Naive thymus-derived CD4-positive, alpha-beta T cell (primary cell): ENCODE measurements at regions of chr12 and their contacts with region 1.

Region 1: DNA sequence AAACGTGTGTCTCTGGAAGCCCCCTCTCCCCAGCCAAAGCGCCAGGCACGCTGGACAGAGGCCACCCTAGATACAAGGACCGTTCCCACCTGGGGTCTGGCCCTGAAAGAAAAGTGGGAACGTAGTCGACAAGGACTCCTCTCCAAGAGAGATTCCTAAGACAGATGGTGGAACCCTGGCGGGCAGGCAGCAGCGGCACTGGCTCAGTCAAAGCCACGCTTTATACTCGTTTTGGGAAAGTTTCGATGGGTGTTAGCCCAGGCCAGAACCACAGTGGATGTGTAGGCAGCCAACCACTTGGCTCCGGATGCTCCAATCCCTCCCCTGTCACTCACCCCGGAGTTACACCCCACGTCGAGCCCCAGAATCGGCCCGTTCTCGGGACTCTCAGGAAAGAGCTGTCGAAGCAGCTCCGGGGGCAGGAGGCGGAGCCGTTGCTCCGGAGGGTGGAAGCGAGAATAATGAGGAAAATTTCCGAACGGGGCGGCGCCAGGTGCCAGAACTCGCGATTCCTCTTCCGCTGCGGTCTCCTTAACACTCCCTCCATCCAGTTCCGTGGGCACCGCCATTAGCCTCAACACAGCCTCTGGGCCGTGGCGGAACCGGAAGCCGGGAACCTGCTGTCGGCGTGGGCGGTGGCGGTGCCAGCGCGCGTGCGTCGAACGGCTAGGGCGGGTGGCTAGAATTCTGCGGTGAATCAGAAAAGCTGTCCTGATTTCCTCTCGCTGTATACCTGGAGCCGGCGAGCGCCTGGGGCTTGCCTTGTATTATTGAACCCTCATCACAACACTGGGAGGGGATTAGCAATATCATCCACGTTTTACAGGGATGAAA is at the start of gene BCDIN3D:
- DNase-seq: peak; percentile 83 to 95 (median 91)
- ATAC-seq: peak; percentile 96
- H3K4me3 ChIP-seq: peak within 1 kb of the TSS; percentile 73
- H3K4me3 Mint-ChIP-seq: peak within 1 kb of the TSS; percentile 85 to 100 (median 94)
- H3K27ac ChIP-seq: peak within 1 kb of the TSS; percentile 80
- H3K27ac Mint-ChIP-seq: peak within 1 kb of the TSS; percentile 90 to 98 (median 96)
- H3K4me1 ChIP-seq: peaks cover 12 to 20% of the 10 kb centered on the region in 2 donors
- H3K4me1 Mint-ChIP-seq: peaks cover 19 to 65% (median 43%) of the 10 kb centered on the region in 7 donors
- H3K27me3 ChIP-seq: no peaks in the 10 kb centered on the region
- H3K27me3 Mint-ChIP-seq: no peaks in the 10 kb centered on the region
- total RNA-seq, gene BCDIN3D: 3.7 to 17.4 (median 6.8) TPM

Region 2: GRCh38 chr12:49366652-49367380 is 475.9 kb before region 1 on chr12:
- CTCF ChIA-PET with region 1: no interaction called
- POLR2A ChIA-PET with region 1: no interaction called
- intact Hi-C with region 1: loop called in 1 of 2 experiments (anchors 1 kb)
- DNase-seq: peak; percentile 72 to 95 (median 82)
- ATAC-seq: peak; percentile 90
- H3K4me3 ChIP-seq: peak overlapping the region; percentile 90
- H3K4me3 Mint-ChIP-seq: peak overlapping the region; percentile 71 to 97 (median 88)
- H3K27ac ChIP-seq: peak overlapping the region; percentile 87
- H3K27ac Mint-ChIP-seq: peak overlapping the region; percentile 65 to 97 (median 94)
- H3K4me1 ChIP-seq: peaks cover 0 to 15% of the 10 kb centered on the region in 2 donors
- H3K4me1 Mint-ChIP-seq: peaks cover 11 to 39% (median 31%) of the 10 kb centered on the region in 7 donors
- H3K27me3 ChIP-seq: no peaks in the 10 kb centered on the region
- H3K27me3 Mint-ChIP-seq: peaks cover 0 to 2% (median 0%) of the 10 kb centered on the region in 5 donors

Region 3: GRCh38 chr12:49636979-49637755 is 205.6 kb before region 1 on chr12:
- CTCF ChIA-PET with region 1: interaction called, 10 read pairs
- POLR2A ChIA-PET with region 1: no interaction called
- intact Hi-C with region 1: loop called in 1 of 2 experiments (anchors 5 kb)
- DNase-seq: peak in 8 of 9 donors; percentile 45 to 71 (median 61)
- ATAC-seq: peak; percentile 95
- H3K4me3 ChIP-seq: no peak overlapping the region
- H3K4me3 Mint-ChIP-seq: peak overlapping the region in 1 of 10 donors; percentile 20
- H3K27ac ChIP-seq: peak overlapping the region; percentile 38
- H3K27ac Mint-ChIP-seq: peak overlapping the region; percentile 13 to 90 (median 68)
- H3K4me1 ChIP-seq: peaks cover 6 to 11% of the 10 kb centered on the region in 2 donors
- H3K4me1 Mint-ChIP-seq: peaks cover 10 to 36% (median 26%) of the 10 kb centered on the region in 7 donors
- H3K27me3 ChIP-seq: no peaks in the 10 kb centered on the region
- H3K27me3 Mint-ChIP-seq: no peaks in the 10 kb centered on the region

Region 4: GRCh38 chr12:49763006-49763591 is 79.6 kb before region 1 on chr12:
- CTCF ChIA-PET with region 1: interaction called, 32 read pairs
- POLR2A ChIA-PET with region 1: interaction called, 3 read pairs
- intact Hi-C with region 1: loop called (anchors 1 kb)
- DNase-seq: peak; percentile 61 to 77 (median 68)
- ATAC-seq: peak; percentile 92
- H3K4me3 ChIP-seq: no peak overlapping the region
- H3K4me3 Mint-ChIP-seq: peak overlapping the region; percentile 29 to 78 (median 54)
- H3K27ac ChIP-seq: peak overlapping the region; percentile 57
- H3K27ac Mint-ChIP-seq: peak overlapping the region; percentile 76 to 93 (median 84)
- H3K4me1 ChIP-seq: peaks cover 25 to 43% of the 10 kb centered on the region in 2 donors
- H3K4me1 Mint-ChIP-seq: peaks cover 42 to 65% (median 60%) of the 10 kb centered on the region in 7 donors
- H3K27me3 ChIP-seq: no peaks in the 10 kb centered on the region
- H3K27me3 Mint-ChIP-seq: no peaks in the 10 kb centered on the region

Region 5: GRCh38 chr12:49828133-49829091 is 14.3 kb before region 1 on chr12 and contains the start of gene NCKAP5L:
- CTCF ChIA-PET with region 1: interaction called, 10 read pairs
- POLR2A ChIA-PET with region 1: interaction called, 43 read pairs
- intact Hi-C with region 1: loop called (anchors 1 kb)
- DNase-seq: peak; percentile 86 to 94 (median 93)
- ATAC-seq: peak; percentile 96
- H3K4me3 ChIP-seq: peak within 1 kb of the TSS; percentile 82
- H3K4me3 Mint-ChIP-seq: peak within 1 kb of the TSS; percentile 88 to 99 (median 96)
- H3K27ac ChIP-seq: peak within 1 kb of the TSS; percentile 79
- H3K27ac Mint-ChIP-seq: peak within 1 kb of the TSS; percentile 89 to 99 (median 95)
- H3K4me1 ChIP-seq: peaks cover 8 to 16% of the 10 kb centered on the region in 2 donors
- H3K4me1 Mint-ChIP-seq: peaks cover 7 to 42% (median 30%) of the 10 kb centered on the region in 7 donors
- H3K27me3 ChIP-seq: no peaks in the 10 kb centered on the region
- H3K27me3 Mint-ChIP-seq: peaks cover 0 to 13% (median 0%) of the 10 kb centered on the region in 5 donors
- total RNA-seq, gene NCKAP5L: 4.3 to 27.5 (median 12.0) TPM

Region 6: GRCh38 chr12:50003595-50003994 is 160.9 kb after region 1 on chr12:
- CTCF ChIA-PET with region 1: no interaction called
- POLR2A ChIA-PET with region 1: no interaction called
- intact Hi-C with region 1: no loop called
- DNase-seq: no peak
- ATAC-seq: no peak
- H3K4me3 ChIP-seq: no peak overlapping the region
- H3K4me3 Mint-ChIP-seq: no peak overlapping the region
- H3K27ac ChIP-seq: no peak overlapping the region
- H3K27ac Mint-ChIP-seq: no peak overlapping the region
- H3K4me1 ChIP-seq: no peaks in the 10 kb centered on the region
- H3K4me1 Mint-ChIP-seq: peaks cover 0 to 7% (median 0%) of the 10 kb centered on the region in 7 donors
- H3K27me3 ChIP-seq: no peaks in the 10 kb centered on the region
- H3K27me3 Mint-ChIP-seq: no peaks in the 10 kb centered on the region